CD8-positive, alpha-beta T cell (primary cell): ENCODE measurements at regions of chr22 and their contacts with region 1.

Region 1: DNA sequence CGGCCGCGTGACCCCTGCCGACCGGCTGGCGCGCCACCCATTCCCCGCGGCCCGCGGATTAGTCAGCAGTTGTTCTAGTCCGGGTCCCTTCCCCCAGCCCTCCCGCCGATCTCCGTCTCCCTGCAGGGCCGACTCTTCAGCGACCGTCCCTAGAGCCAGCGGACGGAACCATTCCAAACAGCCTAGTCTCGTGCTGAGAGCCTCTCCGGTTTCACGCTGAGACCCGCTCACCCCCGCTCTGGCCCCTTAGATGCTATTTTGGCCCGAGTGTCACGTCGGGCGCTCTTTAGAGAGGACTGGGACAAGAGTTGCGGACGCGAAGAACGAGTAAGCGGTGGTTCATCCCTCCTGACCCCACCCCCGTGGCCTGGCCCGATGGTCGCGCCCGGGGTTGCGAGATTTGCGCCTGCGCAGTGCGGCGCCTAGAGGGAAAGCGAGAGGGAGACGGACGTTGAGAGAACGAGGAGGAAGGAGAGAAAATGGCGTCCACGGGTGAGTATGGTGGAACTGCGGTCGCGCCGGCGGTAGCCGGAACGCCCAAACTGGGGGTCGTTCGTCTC is at the starts of genes EWSR1 and RHBDD3:
- DNase-seq: peak; percentile 92 to 99 (median 96)
- ATAC-seq: peak; percentile 85
- H3K4me3 ChIP-seq: peak within 1 kb of the TSS; percentile 87 to 100
- H3K4me3 Mint-ChIP-seq: peak within 1 kb of the TSS; percentile 95
- H3K27ac ChIP-seq: peak within 1 kb of the TSS; percentile 98 to 100
- H3K27ac Mint-ChIP-seq: peak within 1 kb of the TSS; percentile 97
- H3K4me1 ChIP-seq: peaks cover 50% of the 10 kb centered on the region
- H3K4me1 Mint-ChIP-seq: peaks cover 56% of the 10 kb centered on the region
- H3K27me3 ChIP-seq: no peaks in the 10 kb centered on the region
- H3K27me3 Mint-ChIP-seq: no peaks in the 10 kb centered on the region
- CTCF ChIP-seq: no peak
- total RNA-seq, gene EWSR1: 326 to 352 TPM
- total RNA-seq, gene RHBDD3: 10.2 to 10.9 TPM

Region 2: DNA sequence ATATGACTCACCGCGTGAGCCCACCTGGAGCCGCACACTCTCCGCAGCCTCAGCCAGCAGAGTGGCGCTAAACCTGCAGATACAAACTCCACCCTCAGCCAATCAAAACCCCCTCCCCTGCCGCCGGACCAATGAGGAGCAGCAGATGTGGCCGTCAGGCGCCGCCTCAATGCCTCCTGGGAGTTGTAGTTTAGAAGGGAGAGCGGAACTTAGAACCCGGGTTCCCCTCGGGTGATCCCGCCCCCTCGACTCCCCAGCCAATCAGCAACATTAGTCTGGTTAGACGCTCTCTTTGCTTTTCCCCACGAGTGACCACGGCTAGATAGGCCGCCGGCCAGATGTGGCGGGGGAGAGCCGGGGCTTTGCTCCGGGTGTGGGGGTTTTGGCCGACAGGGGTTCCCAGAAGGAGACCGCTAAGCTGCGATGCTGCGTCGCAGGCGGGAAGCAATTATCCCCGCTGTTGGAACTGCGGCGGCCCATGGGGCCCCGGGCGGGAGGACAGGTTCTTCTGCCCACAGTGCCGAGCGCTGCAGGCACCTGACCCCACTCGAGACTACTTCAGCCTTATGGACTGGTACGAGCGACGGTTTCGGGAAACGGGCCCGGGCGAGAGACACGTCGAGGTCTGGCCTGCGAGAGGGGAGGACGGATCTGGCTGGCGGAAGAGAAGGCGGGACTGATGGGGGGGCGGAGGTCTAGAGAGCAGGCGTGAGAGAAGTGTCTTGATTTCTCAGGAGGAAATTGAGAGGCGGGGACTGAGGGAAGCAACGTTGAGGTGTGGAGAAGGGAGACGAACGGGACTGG is 526.0 kb before region 1 on chr22 and contains the starts of genes CHEK2 and HSCB:
- CTCF ChIA-PET with region 1: no interaction called
- POLR2A ChIA-PET with region 1: no interaction called
- intact Hi-C with region 1: loop called (anchors 5 to 10 kb)
- DNase-seq: peak; percentile 94 to 99 (median 96)
- ATAC-seq: peak; percentile 94
- H3K4me3 ChIP-seq: peak within 1 kb of the TSS; percentile 85 to 98
- H3K4me3 Mint-ChIP-seq: peak within 1 kb of the TSS; percentile 88
- H3K27ac ChIP-seq: peak within 1 kb of the TSS; percentile 82 to 94
- H3K27ac Mint-ChIP-seq: peak within 1 kb of the TSS; percentile 92
- H3K4me1 ChIP-seq: peaks cover 13% of the 10 kb centered on the region
- H3K4me1 Mint-ChIP-seq: peaks cover 22% of the 10 kb centered on the region
- H3K27me3 ChIP-seq: no peaks in the 10 kb centered on the region
- H3K27me3 Mint-ChIP-seq: no peaks in the 10 kb centered on the region
- CTCF ChIP-seq: no peak
- total RNA-seq, gene CHEK2: 2.1 to 3.6 TPM
- total RNA-seq, gene HSCB: 4.8 to 5.9 TPM

Region 3: GRCh38 chr22:29245637-29246385 is 22.1 kb before region 1 on chr22:
- CTCF ChIA-PET with region 1: interaction called, 15 read pairs
- POLR2A ChIA-PET with region 1: no interaction called
- intact Hi-C with region 1: no loop called
- DNase-seq: peak; percentile 43 to 79 (median 66)
- ATAC-seq: peak; percentile 91
- H3K4me3 ChIP-seq: no peak overlapping the region
- H3K4me3 Mint-ChIP-seq: no peak overlapping the region
- H3K27ac ChIP-seq: no peak overlapping the region
- H3K27ac Mint-ChIP-seq: no peak overlapping the region
- H3K4me1 ChIP-seq: no peaks in the 10 kb centered on the region
- H3K4me1 Mint-ChIP-seq: no peaks in the 10 kb centered on the region
- H3K27me3 ChIP-seq: no peaks in the 10 kb centered on the region
- H3K27me3 Mint-ChIP-seq: peaks cover 20% of the 10 kb centered on the region
- CTCF ChIP-seq: peak; percentile 90

Region 4: DNA sequence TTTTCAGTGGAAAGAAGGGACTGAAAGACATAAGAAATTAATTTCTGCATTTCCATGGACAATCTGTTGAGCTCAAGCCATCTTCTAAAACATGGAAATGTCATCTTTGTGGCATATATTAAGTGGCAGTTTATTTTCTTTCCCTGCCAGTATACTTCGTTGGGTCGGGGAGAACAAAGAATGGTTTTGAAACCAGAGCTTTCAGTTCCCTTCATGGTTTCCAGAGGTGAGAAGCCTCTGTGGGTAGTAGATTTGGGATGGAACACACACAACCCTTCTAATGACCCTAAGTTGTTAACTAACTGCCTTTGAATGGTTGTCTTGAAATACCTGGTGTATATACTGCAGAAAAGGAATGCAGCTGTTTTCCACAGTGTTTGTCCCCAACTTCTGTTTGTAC is 20.9 kb after region 1 on chr22:
- CTCF ChIA-PET with region 1: no interaction called
- POLR2A ChIA-PET with region 1: interaction called, 7 read pairs
- intact Hi-C with region 1: loop called in 1 of 2 experiments (anchors 2 kb)
- DNase-seq: no peak
- ATAC-seq: no peak
- H3K4me3 ChIP-seq: no peak overlapping the region
- H3K4me3 Mint-ChIP-seq: no peak overlapping the region
- H3K27ac ChIP-seq: no peak overlapping the region
- H3K27ac Mint-ChIP-seq: no peak overlapping the region
- H3K4me1 ChIP-seq: no peaks in the 10 kb centered on the region
- H3K4me1 Mint-ChIP-seq: peaks cover 22% of the 10 kb centered on the region
- H3K27me3 ChIP-seq: no peaks in the 10 kb centered on the region
- H3K27me3 Mint-ChIP-seq: no peaks in the 10 kb centered on the region
- CTCF ChIP-seq: no peak

Region 5: DNA sequence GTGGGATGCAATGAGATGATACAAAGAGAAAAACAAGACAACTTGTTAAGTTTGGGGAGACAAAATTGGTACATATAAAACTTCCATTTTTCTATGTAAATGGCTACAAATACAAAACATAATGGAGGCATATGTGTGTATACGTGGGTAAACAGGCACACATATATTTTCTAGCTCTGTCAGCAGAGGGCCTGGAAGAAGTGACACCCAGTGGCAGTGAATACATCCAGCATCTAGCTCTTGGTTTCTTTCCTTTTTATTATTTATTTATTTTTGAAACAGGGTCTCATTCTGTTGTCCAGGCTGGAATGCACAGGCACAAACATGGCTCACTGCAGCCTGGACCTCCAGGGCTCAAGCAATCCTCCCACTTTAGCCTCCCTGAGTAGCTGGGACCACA is 52.6 kb after region 1 on chr22:
- CTCF ChIA-PET with region 1: no interaction called
- POLR2A ChIA-PET with region 1: no interaction called
- intact Hi-C with region 1: no loop called
- DNase-seq: no peak
- ATAC-seq: no peak
- H3K4me3 ChIP-seq: no peak overlapping the region
- H3K4me3 Mint-ChIP-seq: no peak overlapping the region
- H3K27ac ChIP-seq: no peak overlapping the region
- H3K27ac Mint-ChIP-seq: no peak overlapping the region
- H3K4me1 ChIP-seq: no peaks in the 10 kb centered on the region
- H3K4me1 Mint-ChIP-seq: no peaks in the 10 kb centered on the region
- H3K27me3 ChIP-seq: peaks cover 3 to 8% of the 10 kb centered on the region in 2 experiments
- H3K27me3 Mint-ChIP-seq: peaks cover 9% of the 10 kb centered on the region
- CTCF ChIP-seq: no peak

Region 6: DNA sequence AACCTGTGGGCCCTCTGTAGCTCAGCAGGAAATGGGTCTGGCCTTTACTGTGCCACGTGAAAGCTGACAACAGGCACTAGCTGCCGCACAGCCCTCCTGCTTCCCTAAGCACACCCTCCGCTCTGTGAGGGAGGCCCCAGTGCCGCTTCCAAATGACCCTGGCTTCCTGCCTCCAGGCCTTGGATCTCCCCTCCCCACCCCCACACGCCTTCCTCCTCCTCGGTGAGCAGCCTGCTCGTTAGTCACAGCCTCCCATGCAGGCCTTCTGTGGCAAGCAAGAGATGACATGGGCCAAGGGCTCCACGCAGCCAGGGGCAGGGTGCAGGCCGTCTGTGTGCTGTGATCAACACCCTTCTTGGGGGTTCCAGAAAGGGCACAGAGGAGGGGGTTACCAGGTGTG is 62.8 kb after region 1 on chr22:
- CTCF ChIA-PET with region 1: no interaction called
- POLR2A ChIA-PET with region 1: no interaction called
- intact Hi-C with region 1: no loop called
- DNase-seq: peak in 1 of 9 experiments; percentile 20
- ATAC-seq: no peak
- H3K4me3 ChIP-seq: no peak overlapping the region
- H3K4me3 Mint-ChIP-seq: no peak overlapping the region
- H3K27ac ChIP-seq: no peak overlapping the region
- H3K27ac Mint-ChIP-seq: no peak overlapping the region
- H3K4me1 ChIP-seq: no peaks in the 10 kb centered on the region
- H3K4me1 Mint-ChIP-seq: no peaks in the 10 kb centered on the region
- H3K27me3 ChIP-seq: no peaks in the 10 kb centered on the region
- H3K27me3 Mint-ChIP-seq: no peaks in the 10 kb centered on the region
- CTCF ChIP-seq: no peak

Region 7: DNA sequence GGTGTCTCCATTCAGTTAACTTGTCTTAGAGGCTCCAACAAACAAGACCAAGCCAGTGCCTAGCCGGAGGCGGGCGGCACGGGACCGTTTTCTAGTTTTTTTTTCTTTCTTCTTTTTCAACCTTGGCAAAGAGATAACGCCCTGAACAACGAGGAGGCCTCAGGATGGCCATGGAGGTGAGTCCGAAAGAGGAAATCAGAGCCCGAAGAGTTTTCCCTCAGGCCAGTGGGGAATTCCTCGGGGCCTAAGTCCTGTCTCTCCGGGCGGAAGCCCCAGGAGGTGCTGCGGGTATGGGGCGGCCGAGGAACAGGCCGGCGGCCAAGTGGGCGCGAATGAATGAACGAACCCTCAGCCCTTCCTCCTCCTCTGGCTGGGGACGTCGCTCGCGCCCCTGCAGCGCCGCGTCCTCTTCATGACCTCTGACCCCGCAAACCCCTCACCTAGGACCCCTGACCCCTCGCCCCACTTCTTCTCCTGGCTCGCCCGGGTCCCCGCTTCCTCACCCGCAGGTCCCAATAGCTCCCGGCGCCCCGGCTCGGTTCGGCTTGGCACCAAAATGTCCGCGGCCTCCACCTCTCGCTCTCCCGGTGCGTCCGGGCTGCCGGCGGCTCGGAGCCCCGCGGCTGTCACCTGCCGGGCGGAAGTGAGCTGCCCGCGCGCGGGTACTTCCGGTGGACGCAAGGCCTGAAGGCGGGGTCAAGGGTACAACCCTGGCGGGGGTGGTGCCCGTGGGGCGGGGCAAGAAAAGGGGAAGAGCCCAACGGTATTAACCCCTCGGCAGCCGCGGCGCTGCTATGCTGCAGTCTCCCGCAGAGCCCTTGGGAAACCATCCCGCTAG is 120.2 kb after region 1 on chr22 and contains the start of gene AP1B1:
- CTCF ChIA-PET with region 1: no interaction called
- POLR2A ChIA-PET with region 1: no interaction called
- intact Hi-C with region 1: loop called (anchors 2 kb)
- DNase-seq: peak; percentile 79 to 96 (median 92)
- ATAC-seq: peak; percentile 94
- H3K4me3 ChIP-seq: peak within 1 kb of the TSS; percentile 62 to 89
- H3K4me3 Mint-ChIP-seq: peak within 1 kb of the TSS; percentile 92
- H3K27ac ChIP-seq: peak within 1 kb of the TSS; percentile 71 to 93
- H3K27ac Mint-ChIP-seq: peak within 1 kb of the TSS; percentile 92
- H3K4me1 ChIP-seq: peaks cover 24% of the 10 kb centered on the region
- H3K4me1 Mint-ChIP-seq: peaks cover 39% of the 10 kb centered on the region
- H3K27me3 ChIP-seq: no peaks in the 10 kb centered on the region
- H3K27me3 Mint-ChIP-seq: no peaks in the 10 kb centered on the region
- CTCF ChIP-seq: no peak
- total RNA-seq, gene AP1B1: 27.9 to 28.1 TPM

Region 8: GRCh38 chr22:29837780-29838598 is 570.1 kb after region 1 on chr22 and contains the start of gene ASCC2:
- CTCF ChIA-PET with region 1: no interaction called
- POLR2A ChIA-PET with region 1: no interaction called
- intact Hi-C with region 1: loop called in 1 of 2 experiments (anchors 5 kb)
- DNase-seq: peak; percentile 97 to 100 (median 99)
- ATAC-seq: peak; percentile 98
- H3K4me3 ChIP-seq: peak within 1 kb of the TSS; percentile 76 to 85
- H3K4me3 Mint-ChIP-seq: peak within 1 kb of the TSS; percentile 92
- H3K27ac ChIP-seq: peak within 1 kb of the TSS; percentile 55 to 85
- H3K27ac Mint-ChIP-seq: peak within 1 kb of the TSS; percentile 97
- H3K4me1 ChIP-seq: peaks cover 15% of the 10 kb centered on the region
- H3K4me1 Mint-ChIP-seq: peaks cover 43% of the 10 kb centered on the region
- H3K27me3 ChIP-seq: no peaks in the 10 kb centered on the region
- H3K27me3 Mint-ChIP-seq: no peaks in the 10 kb centered on the region
- CTCF ChIP-seq: no peak
- total RNA-seq, gene ASCC2: 66.2 to 76.5 TPM

Region 9: DNA sequence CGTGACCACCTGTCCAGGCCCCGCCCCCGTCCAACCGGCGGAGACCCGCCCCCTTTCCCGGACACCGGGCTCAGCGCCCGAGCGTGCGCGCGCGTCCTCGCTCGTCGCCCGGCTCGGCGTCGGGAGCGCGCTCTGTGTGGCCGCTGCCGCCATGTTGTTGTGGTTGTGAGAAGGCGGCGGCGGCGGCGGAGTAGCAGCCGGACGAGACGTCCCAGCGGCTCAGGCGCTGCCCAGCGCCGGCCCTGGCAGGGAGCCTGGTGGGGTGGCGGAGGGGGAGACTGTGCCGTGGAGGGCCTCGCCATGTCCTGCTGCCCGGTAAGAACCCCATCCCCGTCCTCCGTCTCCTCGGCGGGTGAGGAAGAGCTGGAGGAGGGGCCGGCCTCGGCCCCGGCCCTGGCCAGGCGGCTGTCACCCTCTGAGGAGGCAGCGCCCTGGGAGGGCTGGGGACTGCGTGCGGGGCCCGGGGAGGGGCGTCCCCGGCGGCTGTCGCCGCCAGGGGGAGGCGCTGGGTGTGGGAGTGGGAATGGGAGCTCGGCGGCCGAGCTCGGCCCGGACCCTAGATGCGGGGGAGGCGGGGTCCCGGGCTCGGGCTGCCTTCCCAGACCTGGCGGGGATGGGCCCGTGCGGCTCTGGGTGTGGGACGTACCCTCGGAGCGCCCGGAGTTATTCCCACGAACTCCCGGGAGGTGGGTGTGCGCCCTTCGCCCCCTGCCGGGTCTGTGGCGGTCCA is 615.3 kb after region 1 on chr22 and contains the start of gene MTMR3:
- CTCF ChIA-PET with region 1: no interaction called
- POLR2A ChIA-PET with region 1: no interaction called
- intact Hi-C with region 1: no loop called
- DNase-seq: peak; percentile 75 to 95 (median 93)
- ATAC-seq: peak; percentile 81
- H3K4me3 ChIP-seq: peak within 1 kb of the TSS; percentile 75 to 87
- H3K4me3 Mint-ChIP-seq: peak within 1 kb of the TSS; percentile 69
- H3K27ac ChIP-seq: peak within 1 kb of the TSS; percentile 72 to 80
- H3K27ac Mint-ChIP-seq: peak within 1 kb of the TSS; percentile 90
- H3K4me1 ChIP-seq: peaks cover 20% of the 10 kb centered on the region
- H3K4me1 Mint-ChIP-seq: peaks cover 8% of the 10 kb centered on the region
- H3K27me3 ChIP-seq: no peaks in the 10 kb centered on the region
- H3K27me3 Mint-ChIP-seq: peaks cover 3% of the 10 kb centered on the region
- CTCF ChIP-seq: peak; percentile 52
- total RNA-seq, gene MTMR3: 46.7 to 51.7 TPM